Calu3 (cell line): ENCODE measurements at regions of chr16 and their contacts with region 1.

Region 1: DNA sequence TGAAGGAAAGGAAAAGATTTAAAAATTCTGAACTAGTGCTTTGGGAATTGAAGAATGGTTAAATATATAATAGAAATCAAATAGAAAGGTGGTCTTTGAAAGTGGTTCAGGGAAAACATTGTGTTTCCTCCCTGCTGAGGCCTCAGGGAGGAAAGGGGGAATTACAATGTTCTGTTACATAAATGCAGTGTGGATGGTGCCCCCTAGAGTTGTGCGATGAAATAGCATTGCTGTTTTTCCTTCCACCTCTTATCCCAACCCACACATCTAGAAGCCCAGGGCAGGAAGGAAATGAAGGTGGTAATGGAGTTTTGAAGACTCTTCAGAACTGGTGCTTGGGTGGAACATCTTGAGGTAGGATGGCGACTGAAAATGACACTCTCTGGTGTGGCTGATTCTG is 6.4 kb upstream of the TOX3 start:
- DNase-seq: no peak
- H3K4me3 Mint-ChIP-seq: no peak overlapping the region
- H3K27ac Mint-ChIP-seq: no peak overlapping the region
- H3K4me1 Mint-ChIP-seq: peaks cover 54% of the 10 kb centered on the region
- H3K27me3 Mint-ChIP-seq: no peaks in the 10 kb centered on the region
- CTCF ChIP-seq: peak; percentile 59

Region 2: GRCh38 chr16:52611817-52612673 is 58.7 kb after region 1 on chr16:
- CTCF ChIA-PET with region 1: no interaction called
- intact Hi-C with region 1: loop called (anchors 5 kb)
- DNase-seq: peak; percentile 71
- H3K4me3 Mint-ChIP-seq: peak overlapping the region; percentile 54
- H3K27ac Mint-ChIP-seq: peak overlapping the region; percentile 30
- H3K4me1 Mint-ChIP-seq: peaks cover 42% of the 10 kb centered on the region
- H3K27me3 Mint-ChIP-seq: no peaks in the 10 kb centered on the region
- CTCF ChIP-seq: no peak